H1 (cell line): ENCODE measurements at regions of chr11 and their contacts with region 1.

Region 1: DNA sequence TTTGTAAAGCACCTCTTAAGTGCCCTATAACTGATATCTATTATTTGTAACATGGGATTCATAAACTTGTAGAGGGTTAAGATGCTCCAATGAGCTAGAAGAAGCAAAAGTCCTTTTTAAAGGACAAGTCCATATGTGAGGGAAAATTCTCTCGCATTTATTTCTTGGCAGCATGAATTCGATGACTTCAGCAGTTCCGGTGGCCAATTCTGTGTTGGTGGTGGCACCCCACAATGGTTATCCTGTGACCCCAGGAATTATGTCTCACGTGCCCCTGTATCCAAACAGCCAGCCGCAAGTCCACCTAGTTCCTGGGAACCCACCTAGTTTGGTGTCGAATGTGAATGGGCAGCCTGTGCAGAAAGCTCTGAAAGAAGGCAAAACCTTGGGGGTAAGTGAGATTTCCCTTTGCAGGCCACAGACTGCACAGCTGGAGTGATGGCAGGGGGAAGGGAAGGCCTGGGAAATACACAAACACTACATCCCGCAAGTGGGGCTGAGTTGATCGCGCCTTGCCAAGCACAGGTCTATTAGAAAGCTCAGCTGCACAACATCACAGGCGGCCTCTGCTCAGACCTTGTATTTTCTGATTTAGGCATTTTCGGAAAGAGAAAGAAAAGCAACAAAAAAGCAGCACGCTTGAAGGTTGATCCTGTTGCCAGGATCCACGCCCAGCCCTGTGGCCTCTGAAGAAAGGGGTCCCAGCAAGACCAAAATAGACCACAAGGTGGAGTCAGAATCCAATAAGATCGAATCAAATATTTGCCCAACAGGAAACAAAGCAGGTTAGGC is 1.5 kb downstream of the MS4A8 start:
- DNase-seq: peak in 1 of 2 experiments; percentile 67
- H3K4me3 ChIP-seq: no peak overlapping the region
- H3K27ac ChIP-seq: no peak overlapping the region
- H3K4me1 ChIP-seq: peaks cover 0 to 2% (median 0%) of the 10 kb centered on the region in 4 experiments; a peak in 3 of 7 replicates
- H3K27me3 ChIP-seq: no peaks in the 10 kb centered on the region
- CTCF ChIP-seq: peak; percentile 35 to 80 (median 70)
- EP300 ChIP-seq: no peak
- POLR2A ChIP-seq: no peak
- RAD21 ChIP-seq: peak; percentile 76 to 77

Region 2: GRCh38 chr11:60332456-60333220 is 368.2 kb before region 1 on chr11:
- CTCF ChIA-PET with region 1: no interaction called
- POLR2A ChIA-PET with region 1: no interaction called
- DNase-seq: no peak
- H3K4me3 ChIP-seq: no peak overlapping the region
- H3K27ac ChIP-seq: no peak overlapping the region
- H3K4me1 ChIP-seq: no peaks in the 10 kb centered on the region; a peak in 2 of 7 replicates
- H3K27me3 ChIP-seq: no peaks in the 10 kb centered on the region
- CTCF ChIP-seq: no peak
- EP300 ChIP-seq: no peak
- POLR2A ChIP-seq: no peak
- RAD21 ChIP-seq: no peak

Region 3: GRCh38 chr11:60607483-60607882 is 93.4 kb before region 1 on chr11:
- CTCF ChIA-PET with region 1: no interaction called
- POLR2A ChIA-PET with region 1: no interaction called
- DNase-seq: no peak
- H3K4me3 ChIP-seq: no peak overlapping the region
- H3K27ac ChIP-seq: no peak overlapping the region
- H3K4me1 ChIP-seq: no peaks in the 10 kb centered on the region
- H3K27me3 ChIP-seq: no peaks in the 10 kb centered on the region
- CTCF ChIP-seq: peak in 1 of 3 experiments; percentile 42; a peak in 1 of 4 replicates
- EP300 ChIP-seq: no peak
- POLR2A ChIP-seq: no peak
- RAD21 ChIP-seq: no peak

Region 4: GRCh38 chr11:60717956-60718355 is 17.1 kb after region 1 on chr11:
- CTCF ChIA-PET with region 1: interaction called, 15 read pairs
- POLR2A ChIA-PET with region 1: no interaction called
- DNase-seq: no peak
- H3K4me3 ChIP-seq: no peak overlapping the region
- H3K27ac ChIP-seq: no peak overlapping the region
- H3K4me1 ChIP-seq: no peaks in the 10 kb centered on the region; a peak in 2 of 7 replicates
- H3K27me3 ChIP-seq: no peaks in the 10 kb centered on the region
- CTCF ChIP-seq: no peak
- EP300 ChIP-seq: no peak
- POLR2A ChIP-seq: no peak
- RAD21 ChIP-seq: no peak

Region 5: DNA sequence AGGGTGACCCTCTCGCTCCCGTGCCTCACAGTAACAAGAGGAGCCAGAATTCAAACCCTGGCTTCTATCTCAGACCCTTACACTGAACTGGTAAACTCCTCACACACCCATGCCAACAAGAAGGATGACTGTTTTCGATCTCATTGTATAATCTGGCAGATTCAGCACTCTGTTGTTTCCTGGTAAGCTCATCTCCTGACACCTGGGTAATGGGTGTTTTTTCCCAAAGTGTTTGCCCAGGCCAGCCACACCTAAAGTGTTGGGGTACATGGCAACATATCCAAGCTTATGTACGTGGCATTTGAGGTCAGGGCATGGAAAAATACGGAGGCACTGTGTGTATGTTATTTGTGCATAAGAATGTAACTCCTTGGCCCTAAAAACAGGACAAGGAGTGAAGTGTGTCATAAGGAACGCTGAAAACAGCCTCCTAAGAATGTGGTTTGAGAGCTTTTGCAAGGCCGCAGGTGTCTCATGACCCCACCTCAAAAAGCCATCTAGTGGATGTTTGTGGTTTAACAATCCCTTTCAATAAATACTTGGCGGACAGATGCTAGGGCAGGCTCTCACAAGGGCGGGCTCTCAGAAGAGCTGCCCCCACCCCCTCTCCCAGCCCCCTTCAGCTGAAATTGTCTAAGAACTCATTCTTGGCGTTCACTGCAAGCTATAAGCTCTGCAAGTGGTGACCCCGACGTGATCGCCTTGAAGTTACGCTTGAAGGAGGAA is 55.6 kb after region 1 on chr11 and contains the start of gene MS4A15:
- CTCF ChIA-PET with region 1: interaction called, 20 read pairs
- POLR2A ChIA-PET with region 1: no interaction called
- DNase-seq: no peak
- H3K4me3 ChIP-seq: no peak within 1 kb of the TSS
- H3K27ac ChIP-seq: no peak within 1 kb of the TSS
- H3K4me1 ChIP-seq: no peaks in the 10 kb centered on the region; a peak in 2 of 7 replicates
- H3K27me3 ChIP-seq: no peaks in the 10 kb centered on the region
- CTCF ChIP-seq: peak; percentile 2 to 63 (median 63)
- EP300 ChIP-seq: no peak
- POLR2A ChIP-seq: no peak
- RAD21 ChIP-seq: peak; percentile 53 to 57
- total RNA-seq, gene MS4A15: 0.17 TPM in 1 of 2 replicates, not detected in the other

Region 6: DNA sequence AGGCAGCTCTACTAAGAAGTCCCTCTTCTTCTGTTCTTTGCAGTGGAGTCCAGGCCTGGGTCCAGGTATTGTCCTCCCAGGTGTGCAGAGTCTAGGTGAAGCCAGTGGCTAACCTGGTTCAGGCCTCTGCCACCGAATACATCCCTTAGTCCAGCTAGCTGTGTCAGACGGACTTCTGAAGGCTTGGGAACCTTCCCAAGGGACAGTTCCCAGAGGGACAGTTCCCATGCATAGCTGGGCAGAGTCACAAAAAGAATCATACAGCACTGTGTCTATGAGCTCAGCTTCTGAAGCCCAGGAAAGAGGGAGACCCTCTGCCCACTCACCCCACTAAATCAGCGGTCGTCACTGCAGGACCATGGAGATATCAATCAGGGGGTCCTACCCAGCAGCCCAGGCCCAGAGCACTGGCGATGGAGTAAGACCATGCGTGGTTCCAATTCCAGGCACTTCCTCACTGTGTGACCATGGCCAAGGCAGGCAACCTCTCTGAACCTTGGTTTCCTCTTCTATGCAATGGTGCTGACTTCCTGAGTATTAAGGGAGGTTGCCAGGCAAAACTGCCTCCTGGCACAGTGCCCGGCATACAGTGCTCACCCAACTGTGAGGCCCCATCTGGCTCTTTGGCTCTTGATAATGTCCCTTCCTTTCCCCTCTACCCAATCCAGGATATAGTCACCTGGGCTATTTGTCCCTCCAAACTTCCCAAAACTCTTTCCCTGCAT is 87.7 kb after region 1 on chr11:
- CTCF ChIA-PET with region 1: no interaction called
- POLR2A ChIA-PET with region 1: no interaction called
- DNase-seq: no peak
- H3K4me3 ChIP-seq: no peak overlapping the region
- H3K27ac ChIP-seq: no peak overlapping the region
- H3K4me1 ChIP-seq: no peaks in the 10 kb centered on the region; a peak in 1 of 7 replicates
- H3K27me3 ChIP-seq: no peaks in the 10 kb centered on the region
- CTCF ChIP-seq: no peak
- EP300 ChIP-seq: no peak
- POLR2A ChIP-seq: no peak
- RAD21 ChIP-seq: no peak

Region 7: GRCh38 chr11:61056571-61056970 is 355.7 kb after region 1 on chr11:
- CTCF ChIA-PET with region 1: no interaction called
- POLR2A ChIA-PET with region 1: no interaction called
- DNase-seq: no peak
- H3K4me3 ChIP-seq: no peak overlapping the region
- H3K27ac ChIP-seq: no peak overlapping the region
- H3K4me1 ChIP-seq: no peaks in the 10 kb centered on the region
- H3K27me3 ChIP-seq: no peaks in the 10 kb centered on the region
- CTCF ChIP-seq: no peak
- EP300 ChIP-seq: no peak
- POLR2A ChIP-seq: no peak
- RAD21 ChIP-seq: peak; percentile 10 to 40; a peak in 3 of 4 replicates